PC-9 (cell line): ENCODE measurements at regions of chr22 and their contacts with region 1.

Region 1: GRCh38 chr22:17077255-17077654 is 7.5 kb upstream of the IL17RA start:
- DNase-seq: no peak
- H3K4me3 ChIP-seq: no peak overlapping the region
- H3K27ac ChIP-seq: no peak overlapping the region
- H3K4me1 ChIP-seq: 0 out of 2 replicates have a peak, but pooled peaks cover 4% of the 10 kb centered on the region
- H3K27me3 ChIP-seq: no peaks in the 10 kb centered on the region
- CTCF ChIP-seq: no peak

Region 2: DNA sequence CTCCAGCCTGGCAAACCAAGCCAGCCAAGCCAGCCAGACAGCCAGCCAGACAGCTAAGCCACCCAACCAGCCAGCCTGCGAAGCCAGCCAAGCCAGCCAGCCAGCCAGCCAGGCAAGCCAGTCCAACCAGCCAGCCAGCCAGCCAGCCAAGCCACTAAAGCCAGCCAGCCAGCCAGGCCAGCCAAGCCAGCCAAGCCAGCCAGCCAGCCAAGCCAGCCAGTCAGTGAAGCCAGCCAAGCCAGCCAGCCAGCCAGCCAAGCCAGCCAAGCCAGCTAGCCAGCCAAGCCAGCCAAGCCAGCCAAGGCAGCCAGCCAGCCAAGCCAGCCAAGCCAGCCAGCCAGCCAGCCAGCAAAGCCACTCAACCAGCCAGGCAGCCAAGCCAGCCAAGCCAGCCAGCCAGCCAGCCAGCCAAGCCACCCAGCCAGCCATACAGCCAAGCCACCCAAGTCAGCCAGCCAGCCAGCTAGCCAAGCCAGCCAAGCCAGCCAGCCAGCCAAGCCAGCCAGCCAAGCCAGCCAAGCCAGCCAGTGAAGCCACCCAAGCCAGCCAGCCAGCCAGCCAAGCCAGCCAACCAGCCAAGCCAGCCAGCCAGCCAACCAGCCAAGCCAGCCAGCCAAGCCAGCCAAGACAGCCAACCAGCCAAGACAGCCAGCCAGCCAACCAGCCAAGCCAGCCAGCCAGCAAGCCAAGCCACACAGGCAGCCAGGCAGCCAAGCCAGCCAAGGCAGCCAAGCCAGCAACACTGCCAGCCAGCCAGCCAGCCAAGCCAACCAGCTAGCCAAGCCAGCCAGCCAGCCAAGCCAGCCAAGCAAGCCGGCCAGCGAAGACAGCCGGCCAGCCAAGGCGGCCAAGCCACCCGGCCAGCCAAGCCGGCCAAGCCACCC is 514.3 kb before region 1 on chr22:
- CTCF ChIA-PET with region 1: no interaction called
- POLR2A ChIA-PET with region 1: no interaction called
- intact Hi-C with region 1: no loop called
- DNase-seq: no peak
- H3K4me3 ChIP-seq: no peak overlapping the region
- H3K27ac ChIP-seq: no peak overlapping the region
- H3K4me1 ChIP-seq: no peaks in the 10 kb centered on the region
- H3K27me3 ChIP-seq: no peaks in the 10 kb centered on the region
- CTCF ChIP-seq: no peak

Region 3: GRCh38 chr22:17047656-17048055 is 29.6 kb before region 1 on chr22:
- CTCF ChIA-PET with region 1: no interaction called
- POLR2A ChIA-PET with region 1: no interaction called
- intact Hi-C with region 1: no loop called
- DNase-seq: no peak
- H3K4me3 ChIP-seq: no peak overlapping the region
- H3K27ac ChIP-seq: no peak overlapping the region
- H3K4me1 ChIP-seq: no peaks in the 10 kb centered on the region
- H3K27me3 ChIP-seq: no peaks in the 10 kb centered on the region
- CTCF ChIP-seq: no peak

Region 4: DNA sequence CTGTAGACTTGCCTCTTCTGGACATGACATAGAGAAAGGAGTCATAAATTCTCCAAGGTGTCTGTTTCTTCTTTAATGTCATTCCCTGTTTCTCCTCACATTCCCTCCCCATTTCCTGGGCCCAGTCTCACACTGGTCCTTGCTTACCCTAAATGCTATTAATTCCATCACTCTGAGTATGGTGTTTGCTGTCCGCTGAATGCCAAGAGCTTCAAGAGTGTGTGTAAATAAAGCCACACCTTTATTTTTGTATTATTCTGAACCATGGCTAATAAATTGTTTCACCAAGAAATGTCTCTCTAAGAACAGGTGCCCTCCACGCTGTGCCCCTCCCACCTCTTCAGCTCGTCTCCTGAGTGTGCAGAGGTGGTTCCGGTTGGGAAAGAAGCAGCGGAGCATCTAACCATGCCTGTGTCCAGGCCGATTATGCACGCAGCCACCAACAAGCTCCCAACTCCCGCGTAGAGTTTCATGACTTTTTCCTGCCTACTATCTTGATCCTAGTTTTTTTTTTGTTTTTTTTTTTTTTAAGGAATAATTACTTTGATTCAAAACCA is 35.3 kb after region 1 on chr22:
- CTCF ChIA-PET with region 1: no interaction called
- POLR2A ChIA-PET with region 1: no interaction called
- intact Hi-C with region 1: no loop called
- DNase-seq: no peak
- H3K4me3 ChIP-seq: no peak overlapping the region
- H3K27ac ChIP-seq: no peak overlapping the region
- H3K4me1 ChIP-seq: no peaks in the 10 kb centered on the region
- H3K27me3 ChIP-seq: no peaks in the 10 kb centered on the region
- CTCF ChIP-seq: no peak

Region 5: DNA sequence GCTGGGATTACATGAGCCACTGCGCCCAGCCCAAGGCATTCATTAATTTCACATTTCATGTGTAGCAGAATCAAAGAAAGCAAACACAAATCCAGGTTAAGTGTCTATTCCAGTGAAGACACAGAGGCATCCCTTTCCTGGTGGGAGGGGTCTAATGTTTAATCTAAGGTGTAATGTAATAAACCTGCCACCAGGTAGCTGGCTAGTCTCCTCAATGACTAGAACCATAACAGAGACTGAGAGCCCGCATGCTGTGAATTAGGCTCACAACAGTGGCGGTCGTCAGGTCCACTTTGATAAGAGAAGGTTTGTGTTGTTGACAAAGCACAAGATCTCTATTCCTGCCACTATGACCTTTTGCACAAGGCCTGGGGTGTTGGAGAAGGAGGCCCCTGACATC is 206.2 kb after region 1 on chr22:
- CTCF ChIA-PET with region 1: no interaction called
- POLR2A ChIA-PET with region 1: no interaction called
- intact Hi-C with region 1: no loop called
- DNase-seq: no peak
- H3K4me3 ChIP-seq: no peak overlapping the region
- H3K27ac ChIP-seq: no peak overlapping the region
- H3K4me1 ChIP-seq: no peaks in the 10 kb centered on the region
- H3K27me3 ChIP-seq: peaks cover 73% of the 10 kb centered on the region
- CTCF ChIP-seq: no peak

Region 6: DNA sequence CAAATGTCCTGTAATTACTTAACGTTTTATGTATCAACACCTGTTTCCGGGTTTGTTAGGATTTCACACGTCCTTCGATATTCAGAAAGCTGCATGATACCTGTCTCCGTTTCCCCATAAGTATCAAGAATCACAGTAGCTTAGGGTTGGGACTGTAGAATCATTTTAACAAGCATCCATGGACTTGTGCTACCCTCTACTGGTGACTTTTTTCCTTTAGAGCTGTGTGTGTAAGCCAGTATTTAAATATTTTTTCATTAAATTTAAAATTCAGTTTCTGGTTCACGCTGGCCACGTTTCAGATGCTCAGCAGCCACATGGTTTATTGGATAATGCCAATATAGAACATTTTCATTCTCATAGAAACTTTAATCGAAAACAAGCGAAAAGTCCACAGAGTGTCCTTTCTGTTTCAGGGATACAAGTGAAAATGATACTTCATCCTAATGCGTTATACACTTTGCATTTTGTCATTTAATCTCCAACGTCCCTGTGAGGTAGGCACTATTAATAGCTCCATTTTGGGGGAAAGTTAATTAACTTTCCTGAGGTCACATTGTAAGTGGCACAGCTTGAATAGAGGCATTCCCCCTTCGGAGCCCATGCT is 424.5 kb after region 1 on chr22:
- CTCF ChIA-PET with region 1: interaction called, 7 read pairs
- POLR2A ChIA-PET with region 1: no interaction called
- intact Hi-C with region 1: loop called (anchors 1 kb)
- DNase-seq: peak in 1 of 2 experiments; percentile 10
- H3K4me3 ChIP-seq: no peak overlapping the region
- H3K27ac ChIP-seq: no peak overlapping the region
- H3K4me1 ChIP-seq: no peaks in the 10 kb centered on the region
- H3K27me3 ChIP-seq: peaks cover 48% of the 10 kb centered on the region
- CTCF ChIP-seq: peak; percentile 75